ENCODE measurements at regions of chr4 and their contacts with region 1.

Region 1: DNA sequence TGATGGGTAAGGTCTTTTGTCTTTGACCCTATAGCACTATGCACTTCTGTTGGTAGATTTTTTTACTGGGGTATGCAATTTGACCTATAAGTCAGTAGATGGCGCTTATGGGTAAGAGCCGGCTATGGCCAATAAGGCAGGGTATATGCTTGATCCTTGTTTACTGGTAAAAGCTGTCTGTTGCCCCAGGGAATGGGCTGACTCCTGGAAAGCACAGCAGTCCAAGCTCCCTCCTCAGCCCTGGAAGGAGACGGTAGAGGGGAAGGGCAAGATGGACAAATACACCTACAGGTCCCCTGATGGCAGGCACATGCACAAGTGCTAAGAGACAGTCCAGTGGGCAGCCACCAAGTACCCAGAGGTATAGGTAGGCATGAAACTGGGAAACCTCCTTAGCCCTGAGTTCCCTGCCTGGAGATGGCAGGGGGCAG is 63.7 kb downstream of the ADAMTS3 start:
- DNase-seq: peak; percentile 22 to 57 (median 38)
- ATAC-seq: peak; percentile 96
- H3K4me3 ChIP-seq: no peak overlapping the region
- H3K27ac ChIP-seq: no peak overlapping the region
- H3K4me1 ChIP-seq: no peaks in the 10 kb centered on the region
- H3K27me3 ChIP-seq: no peaks in the 10 kb centered on the region
- CTCF ChIP-seq: peak; percentile 63 to 75 (median 68)
- EP300 ChIP-seq: no peak
- POLR2A ChIP-seq: no peak
- RAD21 ChIP-seq: peak; percentile 66 to 86

Region 2: GRCh38 chr4:72169861-72170260 is 335.5 kb before region 1 on chr4:
- CTCF ChIA-PET with region 1: no interaction called
- POLR2A ChIA-PET with region 1: no interaction called
- in situ Hi-C with region 1: no loop called
- intact Hi-C with region 1: no loop called
- DNase-seq: peak in 1 of 4 experiments; percentile 1
- ATAC-seq: no peak
- H3K4me3 ChIP-seq: no peak overlapping the region
- H3K27ac ChIP-seq: no peak overlapping the region
- H3K4me1 ChIP-seq: no peaks in the 10 kb centered on the region
- H3K27me3 ChIP-seq: no peaks in the 10 kb centered on the region
- CTCF ChIP-seq: no peak
- EP300 ChIP-seq: no peak
- POLR2A ChIP-seq: no peak
- RAD21 ChIP-seq: no peak

Region 3: GRCh38 chr4:72390409-72390808 is 114.9 kb before region 1 on chr4:
- CTCF ChIA-PET with region 1: no interaction called
- POLR2A ChIA-PET with region 1: no interaction called
- in situ Hi-C with region 1: no loop called
- intact Hi-C with region 1: no loop called
- DNase-seq: no peak
- ATAC-seq: no peak
- H3K4me3 ChIP-seq: no peak overlapping the region
- H3K27ac ChIP-seq: no peak overlapping the region
- H3K4me1 ChIP-seq: no peaks in the 10 kb centered on the region
- H3K27me3 ChIP-seq: no peaks in the 10 kb centered on the region
- CTCF ChIP-seq: no peak
- EP300 ChIP-seq: no peak
- POLR2A ChIP-seq: no peak
- RAD21 ChIP-seq: no peak

Region 4: DNA sequence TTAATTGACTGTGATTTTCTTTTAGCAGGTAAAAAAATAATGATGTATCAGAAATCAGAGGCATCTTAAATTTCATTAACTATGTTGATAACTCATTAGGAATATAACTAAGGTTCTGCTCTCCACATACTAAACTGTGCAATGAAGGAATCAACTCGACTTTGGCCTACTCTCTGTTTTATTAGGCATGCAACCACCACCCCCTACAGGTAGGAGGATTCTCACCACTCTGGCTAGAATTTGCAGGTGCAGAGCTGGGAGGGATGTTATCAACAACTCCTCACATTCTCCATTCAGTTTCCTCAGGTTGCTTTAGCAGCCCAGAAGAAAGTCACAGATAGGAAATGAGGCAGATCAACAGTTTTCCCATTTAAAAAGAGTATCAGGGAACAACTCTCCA is 404.1 kb after region 1 on chr4:
- CTCF ChIA-PET with region 1: no interaction called
- POLR2A ChIA-PET with region 1: no interaction called
- in situ Hi-C with region 1: no loop called
- intact Hi-C with region 1: loop called (anchors 1 kb)
- DNase-seq: peak; percentile 14 to 27 (median 19)
- ATAC-seq: peak; percentile 73
- H3K4me3 ChIP-seq: no peak overlapping the region
- H3K27ac ChIP-seq: no peak overlapping the region
- H3K4me1 ChIP-seq: no peaks in the 10 kb centered on the region
- H3K27me3 ChIP-seq: no peaks in the 10 kb centered on the region
- CTCF ChIP-seq: peak; percentile 36 to 49 (median 46); a peak in 5 of 6 replicates
- EP300 ChIP-seq: no peak
- POLR2A ChIP-seq: no peak
- RAD21 ChIP-seq: peak; percentile 23 to 61; a peak in 3 of 4 replicates